ENCODE measurements at regions of chr1 and their contacts with region 1.

Region 1: DNA sequence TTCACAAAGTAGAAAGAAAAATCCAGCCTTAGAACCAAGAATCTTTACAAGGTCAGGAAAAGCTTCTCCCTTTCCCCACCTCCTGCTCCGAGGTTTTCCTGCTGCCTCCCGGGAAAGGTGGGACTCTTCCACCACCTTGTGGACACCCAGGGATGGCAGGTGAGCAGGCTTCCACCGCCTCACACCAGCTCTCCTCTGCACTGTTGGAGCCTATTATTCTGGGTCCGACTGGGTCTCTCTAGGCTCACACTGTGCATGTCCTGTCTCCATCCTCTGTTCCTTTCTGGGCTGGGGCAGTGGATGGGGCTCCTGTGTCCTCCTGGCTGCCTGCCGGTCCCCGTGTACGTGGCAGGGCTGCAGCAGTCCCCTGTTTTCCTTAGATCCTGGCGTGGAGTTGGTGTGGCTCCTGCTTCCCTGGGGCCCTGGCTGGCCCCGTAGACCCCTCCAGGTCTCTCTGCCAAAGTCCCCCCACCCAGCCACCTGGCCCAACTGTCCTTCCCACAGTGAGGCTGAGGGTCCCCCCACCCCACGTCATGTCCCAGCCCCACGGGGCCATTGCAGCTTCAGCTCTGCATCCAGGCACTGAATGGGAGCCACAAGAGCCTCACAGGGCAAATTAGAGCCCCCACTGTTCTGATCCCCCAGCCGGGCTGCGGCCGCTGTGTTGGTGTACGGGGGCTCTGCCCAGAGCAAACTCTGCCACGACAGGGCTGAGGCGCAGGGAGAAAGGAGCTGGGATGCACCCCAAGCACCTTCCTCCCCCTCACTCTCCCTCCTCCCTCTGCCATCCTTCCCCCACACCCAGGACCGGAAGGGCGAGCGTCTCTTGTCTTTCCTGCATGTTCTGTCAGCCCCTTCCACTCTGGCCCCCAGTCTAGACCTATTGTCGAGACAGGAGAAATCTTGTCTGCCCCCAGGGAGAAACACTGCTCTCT is 3.3 kb upstream of the SLC45A1 start:
- DNase-seq: peak; percentile 76
- CTCF ChIP-seq: peak; percentile 83

Region 2: GRCh38 chr1:7983086-7983778 is 331.4 kb before region 1 on chr1:
- CTCF ChIA-PET with region 1: interaction called, 13 read pairs
- POLR2A ChIA-PET with region 1: no interaction called
- DNase-seq: no peak
- CTCF ChIP-seq: no peak

Region 3: GRCh38 chr1:8015036-8015808 is 299.4 kb before region 1 on chr1:
- CTCF ChIA-PET with region 1: interaction called, 116 read pairs
- POLR2A ChIA-PET with region 1: no interaction called
- DNase-seq: peak; percentile 54
- CTCF ChIP-seq: peak; percentile 63

Region 4: DNA sequence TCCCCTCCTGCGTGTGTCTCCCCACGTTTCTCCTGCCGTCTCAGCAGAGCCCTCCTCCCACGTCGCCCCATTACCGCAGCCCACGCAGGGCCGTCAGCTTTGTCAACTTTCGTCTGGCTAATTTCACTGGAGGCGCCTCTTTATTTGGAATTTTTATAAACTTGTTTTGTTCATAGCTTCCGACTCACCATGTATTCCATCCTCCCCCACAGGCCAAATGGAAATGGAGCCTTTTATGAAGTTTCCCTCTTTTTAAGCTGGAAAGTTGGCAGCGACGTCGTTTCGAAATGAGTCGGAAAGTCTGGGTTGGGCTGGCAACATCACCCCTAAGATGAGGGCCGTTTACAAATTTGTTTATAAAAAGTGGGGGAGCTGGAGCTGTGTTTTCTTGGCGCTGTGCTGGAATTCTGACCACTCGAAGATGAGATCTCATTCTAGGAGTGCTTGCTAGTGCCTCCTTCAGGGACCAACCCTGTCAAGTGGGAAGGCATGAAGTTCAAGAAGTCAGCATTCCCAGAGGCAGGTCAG is 20.4 kb before region 1 on chr1:
- CTCF ChIA-PET with region 1: interaction called, 23 read pairs
- POLR2A ChIA-PET with region 1: no interaction called
- DNase-seq: no peak
- CTCF ChIP-seq: no peak

Region 5: DNA sequence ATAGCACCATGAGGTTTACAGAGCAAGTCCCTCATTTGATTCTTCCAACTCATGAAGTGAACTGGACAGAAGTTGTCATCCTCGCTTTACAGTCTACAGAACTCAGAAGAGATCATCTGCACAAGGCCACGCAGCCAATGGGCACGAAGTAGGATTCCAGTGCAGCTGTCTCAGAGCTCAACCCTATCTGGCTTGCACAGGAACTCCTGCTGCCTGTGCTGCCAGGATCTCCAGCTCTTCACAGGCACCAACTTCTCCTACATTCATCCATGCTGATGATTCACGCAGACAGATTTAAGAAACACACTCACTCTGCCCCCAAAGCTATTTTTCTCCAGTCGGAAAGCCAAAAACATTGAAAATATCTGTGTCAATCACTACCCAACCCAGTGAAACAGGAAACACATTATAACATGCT is 345.8 kb after region 1 on chr1:
- CTCF ChIA-PET with region 1: no interaction called
- POLR2A ChIA-PET with region 1: no interaction called
- DNase-seq: no peak
- CTCF ChIP-seq: no peak

Measured in GM10248 (cell line).